WTC11 (cell line): ENCODE measurements at regions of chr19 and their contacts with region 1.

Region 1: GRCh38 chr19:11798391-11799330 is at the start of gene ZNF491:
- DNase-seq: peak; percentile 97
- ATAC-seq: peak; percentile 98
- H3K4me3 Mint-ChIP-seq: peak within 1 kb of the TSS; percentile 84
- H3K27ac Mint-ChIP-seq: peak within 1 kb of the TSS; percentile 88
- H3K4me1 Mint-ChIP-seq: peaks cover 18% of the 10 kb centered on the region
- H3K27me3 Mint-ChIP-seq: peaks cover 46% of the 10 kb centered on the region
- CTCF ChIP-seq: no peak
- total RNA-seq, gene ZNF491: 1.1 to 2.1 TPM (median 1.3 TPM) in 3 replicates

Region 2: DNA sequence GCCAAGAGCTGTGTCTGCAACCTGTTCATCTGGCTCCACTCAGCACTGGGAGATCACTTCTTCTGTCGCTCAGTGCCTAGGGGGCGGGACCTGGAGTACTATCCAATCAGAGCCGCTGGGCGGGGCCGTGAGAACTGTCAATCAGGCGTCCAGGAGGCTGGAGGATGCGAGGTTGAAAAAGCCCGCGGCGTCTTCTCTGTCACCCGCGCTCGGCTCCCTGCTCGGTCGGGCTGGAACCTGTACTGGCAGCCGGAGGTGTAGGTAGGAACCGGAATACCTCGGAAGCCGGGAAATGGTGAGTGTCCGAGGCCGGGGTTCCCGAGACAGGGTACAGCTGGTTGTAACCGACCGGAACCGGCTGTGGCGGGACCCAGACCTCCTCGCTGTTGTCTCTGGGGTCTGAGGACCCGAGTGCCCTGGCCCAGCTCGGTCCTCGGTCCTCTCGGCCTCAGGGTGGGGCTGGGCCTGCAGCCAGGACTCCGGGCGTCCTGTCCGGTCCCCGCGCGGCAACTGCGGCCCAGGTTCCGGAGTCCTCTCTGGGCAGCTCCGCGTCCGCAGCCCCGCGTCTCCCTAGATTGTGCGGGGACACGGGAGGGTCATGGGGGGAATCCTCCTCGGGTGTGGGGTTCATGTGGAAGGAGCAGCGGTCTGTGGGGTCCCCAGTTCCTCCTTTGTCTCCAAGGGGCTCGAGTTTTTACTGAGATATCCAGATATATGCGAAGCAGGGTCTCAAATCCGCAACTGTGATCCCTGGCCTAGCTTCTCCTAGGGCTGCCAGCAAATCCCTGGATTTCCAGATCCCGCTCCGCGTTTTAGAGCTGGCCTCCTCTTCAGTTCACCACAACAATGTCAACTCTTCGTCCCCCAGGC is 158.8 kb before region 1 on chr19:
- CTCF ChIA-PET with region 1: interaction called, 11 read pairs
- POLR2A ChIA-PET with region 1: interaction called, 5 read pairs
- DNase-seq: peak; percentile 100
- ATAC-seq: peak; percentile 98
- H3K4me3 Mint-ChIP-seq: peak overlapping the region; percentile 87
- H3K27ac Mint-ChIP-seq: peak overlapping the region; percentile 84
- H3K4me1 Mint-ChIP-seq: peaks cover 4% of the 10 kb centered on the region
- H3K27me3 Mint-ChIP-seq: no peaks in the 10 kb centered on the region
- CTCF ChIP-seq: no peak

Region 3: GRCh38 chr19:11699931-11700794 is 98.5 kb before region 1 on chr19:
- CTCF ChIA-PET with region 1: interaction called, 28 read pairs
- POLR2A ChIA-PET with region 1: interaction called, 5 read pairs
- DNase-seq: no peak
- ATAC-seq: peak; percentile 61
- H3K4me3 Mint-ChIP-seq: no peak overlapping the region
- H3K27ac Mint-ChIP-seq: peak overlapping the region; percentile 36; the same call in 1 of the 2 replicates
- H3K4me1 Mint-ChIP-seq: 0 out of 2 replicates have a peak, but pooled peaks cover 5% of the 10 kb centered on the region
- H3K27me3 Mint-ChIP-seq: peaks cover 18% of the 10 kb centered on the region
- CTCF ChIP-seq: peak; percentile 41

Region 4: GRCh38 chr19:11756965-11757364 is 41.7 kb before region 1 on chr19:
- CTCF ChIA-PET with region 1: no interaction called
- POLR2A ChIA-PET with region 1: no interaction called
- DNase-seq: no peak
- ATAC-seq: no peak
- H3K4me3 Mint-ChIP-seq: no peak overlapping the region
- H3K27ac Mint-ChIP-seq: no peak overlapping the region
- H3K4me1 Mint-ChIP-seq: no peaks in the 10 kb centered on the region
- H3K27me3 Mint-ChIP-seq: peaks cover 49% of the 10 kb centered on the region
- CTCF ChIP-seq: no peak

Region 5: DNA sequence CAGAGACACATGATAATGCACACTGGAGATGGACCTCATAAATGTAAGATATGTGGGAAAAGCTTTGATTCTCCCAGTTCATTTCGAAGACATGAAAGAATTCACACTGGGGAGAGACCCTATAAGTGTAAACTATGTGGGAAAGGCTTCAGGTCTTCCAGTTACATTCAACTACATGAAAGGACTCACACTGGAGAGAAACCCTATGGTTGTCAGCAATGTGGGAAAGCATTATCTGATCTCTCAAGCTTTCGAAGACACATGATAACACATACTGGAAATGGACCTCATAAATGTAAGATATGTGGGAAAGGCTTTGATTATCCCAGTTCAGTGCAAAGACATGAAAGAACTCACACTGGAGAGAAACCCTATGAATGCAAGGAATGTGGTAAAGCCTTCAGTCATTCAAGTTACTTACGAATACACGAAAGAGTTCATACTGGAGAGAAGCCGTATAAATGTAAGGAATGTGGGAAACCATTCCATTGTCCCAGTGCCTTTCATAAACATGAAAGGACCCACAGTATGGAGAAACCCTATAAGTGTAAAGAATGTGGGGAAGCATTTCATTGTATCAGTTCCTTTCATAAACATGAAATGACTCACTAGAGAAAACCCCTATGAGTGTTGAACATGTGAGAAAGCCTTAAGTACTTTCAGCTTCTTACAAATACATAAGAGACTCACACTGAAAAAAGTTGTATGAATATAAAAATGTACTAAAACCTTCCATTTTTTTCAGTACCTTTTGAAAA is 17.2 kb before region 1 on chr19:
- CTCF ChIA-PET with region 1: interaction called, 14 read pairs
- POLR2A ChIA-PET with region 1: no interaction called
- DNase-seq: no peak
- ATAC-seq: no peak
- H3K4me3 Mint-ChIP-seq: no peak overlapping the region
- H3K27ac Mint-ChIP-seq: no peak overlapping the region
- H3K4me1 Mint-ChIP-seq: peaks cover 2% of the 10 kb centered on the region; the same call in 1 of the 2 replicates
- H3K27me3 Mint-ChIP-seq: peaks cover 9% of the 10 kb centered on the region
- CTCF ChIP-seq: no peak

Region 6: DNA sequence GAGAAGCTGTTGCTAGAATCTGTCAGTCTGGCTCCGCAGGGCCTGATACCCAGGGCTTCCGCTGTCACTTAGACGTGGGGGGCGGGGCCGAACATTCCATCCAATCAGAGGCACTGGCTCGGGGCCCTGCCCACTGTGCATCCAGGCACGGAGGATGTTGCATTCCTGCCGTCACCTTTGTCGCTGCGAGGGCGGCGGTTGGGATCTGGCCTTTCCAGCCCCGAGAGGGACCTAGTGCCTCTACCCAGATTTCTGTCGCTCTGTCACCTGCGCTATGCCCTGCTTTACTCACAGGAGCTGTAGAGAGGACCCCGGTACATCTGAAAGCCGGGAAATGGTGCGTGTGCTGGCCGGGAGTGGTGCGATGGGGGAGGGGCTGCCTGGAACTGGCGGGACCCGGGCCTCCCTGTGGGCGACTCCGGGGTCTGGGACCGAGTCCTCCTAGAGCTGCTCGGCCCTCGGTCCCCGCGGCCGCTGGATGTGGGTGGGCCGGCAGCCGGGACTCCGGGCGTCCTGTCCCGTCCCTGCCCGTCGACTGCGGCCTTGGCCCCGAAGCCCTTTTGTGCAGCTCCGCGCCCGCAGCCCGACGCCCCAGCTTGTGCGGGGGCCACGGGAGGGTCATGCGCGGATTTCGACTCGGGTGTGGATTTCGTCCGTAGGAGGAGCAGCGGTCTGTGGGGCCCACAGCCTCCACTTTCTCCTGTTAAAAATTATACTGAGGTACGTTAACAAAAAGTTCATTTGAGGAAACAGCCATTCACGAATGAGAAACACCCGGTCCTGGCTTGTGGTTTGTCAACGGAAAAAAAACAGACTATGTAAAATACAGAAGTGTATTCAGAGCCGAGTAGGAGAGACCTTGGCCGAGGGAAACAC is 50.2 kb after region 1 on chr19 and contains the start of gene ZNF439:
- CTCF ChIA-PET with region 1: interaction called, 27 read pairs
- POLR2A ChIA-PET with region 1: interaction called, 3 read pairs
- DNase-seq: peak; percentile 94
- ATAC-seq: peak; percentile 95
- H3K4me3 Mint-ChIP-seq: peak within 1 kb of the TSS; percentile 80
- H3K27ac Mint-ChIP-seq: peak within 1 kb of the TSS; percentile 88
- H3K4me1 Mint-ChIP-seq: peaks cover 24% of the 10 kb centered on the region
- H3K27me3 Mint-ChIP-seq: peaks cover 20% of the 10 kb centered on the region
- CTCF ChIP-seq: no peak
- total RNA-seq, gene ZNF439: 5.7 to 8.5 TPM (median 7.2 TPM) in 3 replicates

Region 7: GRCh38 chr19:11924886-11925650 is 126.4 kb after region 1 on chr19 and contains the start of gene ZNF700:
- CTCF ChIA-PET with region 1: interaction called, 11 read pairs
- POLR2A ChIA-PET with region 1: no interaction called
- DNase-seq: peak; percentile 97
- ATAC-seq: peak; percentile 91
- H3K4me3 Mint-ChIP-seq: peak within 1 kb of the TSS; percentile 96
- H3K27ac Mint-ChIP-seq: peak within 1 kb of the TSS; percentile 99
- H3K4me1 Mint-ChIP-seq: peaks cover 24% of the 10 kb centered on the region
- H3K27me3 Mint-ChIP-seq: no peaks in the 10 kb centered on the region; the same call in 1 of the 2 replicates
- CTCF ChIP-seq: no peak
- total RNA-seq, gene ZNF700: 9.1 to 11.4 TPM (median 10.7 TPM) in 3 replicates

Region 8: DNA sequence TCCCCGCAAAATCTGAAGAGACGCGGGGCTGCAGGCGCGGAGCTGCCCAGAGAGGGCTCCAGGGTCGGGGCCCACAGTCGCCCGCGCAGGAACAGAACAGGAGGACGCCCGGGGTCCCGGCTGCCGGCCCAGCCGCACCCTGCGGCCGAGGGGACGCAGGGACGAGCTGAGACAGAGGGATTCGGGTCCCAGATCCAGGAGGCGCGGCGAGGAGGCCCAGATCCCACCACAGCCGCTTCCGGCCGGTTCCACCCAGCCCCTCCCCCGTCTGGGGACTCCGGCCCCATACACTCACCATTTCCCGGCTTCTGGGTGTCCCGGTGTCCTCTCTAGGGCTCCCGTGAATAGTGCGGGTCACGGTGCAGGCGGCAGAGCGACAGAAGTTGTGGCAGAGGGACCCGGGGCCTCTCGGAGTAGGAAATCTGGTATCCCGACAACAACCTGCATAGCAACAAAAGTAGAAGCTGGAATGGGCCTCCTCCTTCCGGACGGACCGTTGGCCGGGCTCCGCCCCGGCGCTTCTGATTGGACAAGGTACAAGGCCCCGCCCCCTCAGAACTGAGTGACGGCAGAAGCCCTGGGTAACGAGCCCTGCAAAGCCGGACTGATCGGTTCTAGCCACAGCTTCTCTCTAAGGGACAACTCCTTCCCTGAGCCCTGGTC is 341.4 kb after region 1 on chr19 and contains the start of gene ZNF20:
- CTCF ChIA-PET with region 1: interaction called, 17 read pairs
- POLR2A ChIA-PET with region 1: no interaction called
- DNase-seq: peak; percentile 99
- ATAC-seq: peak; percentile 93
- H3K4me3 Mint-ChIP-seq: peak within 1 kb of the TSS; percentile 94
- H3K27ac Mint-ChIP-seq: peak within 1 kb of the TSS; percentile 98
- H3K4me1 Mint-ChIP-seq: peaks cover 30% of the 10 kb centered on the region
- H3K27me3 Mint-ChIP-seq: no peaks in the 10 kb centered on the region
- CTCF ChIP-seq: no peak
- total RNA-seq, gene ZNF20: 5.0 to 9.1 TPM (median 7.8 TPM) in 3 replicates